Astrocyte of the cerebellum (primary cell): ENCODE measurements at regions of chr10 and their contacts with region 1.

Region 1: GRCh38 chr10:50417886-50418830 is 166.8 kb upstream of the ASAH2 start:
- DNase-seq: peak; percentile 42
- H3K4me3 ChIP-seq: peak overlapping the region; percentile 59
- CTCF ChIP-seq: no peak

Region 2: DNA sequence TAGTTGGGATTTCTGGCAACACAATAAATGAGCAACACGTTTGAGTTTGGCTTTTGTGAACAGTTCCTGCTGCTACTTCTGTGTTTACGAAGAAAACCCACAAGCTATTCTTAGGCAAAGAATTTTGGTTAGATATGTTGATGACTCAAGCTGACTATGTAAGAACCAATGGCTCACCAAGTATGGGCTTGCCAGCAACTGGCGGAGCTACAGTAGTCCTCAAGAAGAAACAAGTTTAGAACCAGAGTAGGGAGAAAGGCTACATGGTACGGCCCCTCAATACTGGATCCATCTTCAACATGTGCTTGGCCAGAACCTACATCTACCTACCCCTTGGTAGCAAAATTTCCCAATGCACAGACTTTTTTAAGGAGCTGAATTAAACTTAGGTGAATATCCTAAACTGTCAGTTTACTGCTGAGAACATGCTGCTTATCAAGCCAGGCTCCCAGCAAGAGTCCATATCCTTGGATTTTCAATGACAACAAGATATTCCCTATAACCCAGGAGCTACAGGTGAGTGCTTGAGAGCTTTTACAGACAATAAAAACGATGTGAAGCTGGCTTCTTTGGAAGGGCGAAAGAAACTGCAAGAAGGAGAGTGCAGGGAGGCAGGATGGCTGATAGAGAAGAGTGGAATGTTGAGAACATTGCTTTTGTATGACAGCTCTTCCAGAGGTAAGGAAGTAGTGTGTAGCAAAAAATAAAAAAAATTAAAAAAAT is 92.5 kb before region 1 on chr10:
- in situ Hi-C with region 1: loop called (anchors 10 kb)
- DNase-seq: peak; percentile 96
- H3K4me3 ChIP-seq: no peak overlapping the region
- CTCF ChIP-seq: no peak

Region 3: DNA sequence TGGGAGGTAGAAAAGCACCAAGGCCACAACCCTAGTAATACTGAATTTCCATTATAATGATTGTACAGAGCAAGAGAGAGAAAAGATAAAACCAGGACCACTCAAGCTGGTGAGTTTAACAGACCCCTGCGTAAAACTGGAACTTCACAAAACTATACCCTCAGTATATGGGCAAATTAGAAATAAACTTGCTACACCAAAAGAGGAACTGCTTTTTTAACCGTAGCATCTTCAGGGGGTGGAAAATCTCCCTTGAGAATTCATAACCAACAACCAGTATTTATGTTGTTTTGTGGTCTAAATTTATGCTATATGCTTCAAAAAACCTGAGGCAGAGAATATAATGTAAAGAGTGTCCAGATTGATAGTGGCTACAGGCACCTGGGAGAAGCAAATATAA is 34.4 kb after region 1 on chr10:
- in situ Hi-C with region 1: loop called (anchors 5 kb)
- DNase-seq: no peak
- H3K4me3 ChIP-seq: no peak overlapping the region
- CTCF ChIP-seq: no peak

Region 4: GRCh38 chr10:50496228-50496627 is 78.1 kb after region 1 on chr10:
- in situ Hi-C with region 1: no loop called
- DNase-seq: no peak
- H3K4me3 ChIP-seq: no peak overlapping the region
- CTCF ChIP-seq: no peak